Heart left ventricle (tissue), 16 donors: ENCODE measurements at regions of chr17 and their contacts with region 1.

Region 1: DNA sequence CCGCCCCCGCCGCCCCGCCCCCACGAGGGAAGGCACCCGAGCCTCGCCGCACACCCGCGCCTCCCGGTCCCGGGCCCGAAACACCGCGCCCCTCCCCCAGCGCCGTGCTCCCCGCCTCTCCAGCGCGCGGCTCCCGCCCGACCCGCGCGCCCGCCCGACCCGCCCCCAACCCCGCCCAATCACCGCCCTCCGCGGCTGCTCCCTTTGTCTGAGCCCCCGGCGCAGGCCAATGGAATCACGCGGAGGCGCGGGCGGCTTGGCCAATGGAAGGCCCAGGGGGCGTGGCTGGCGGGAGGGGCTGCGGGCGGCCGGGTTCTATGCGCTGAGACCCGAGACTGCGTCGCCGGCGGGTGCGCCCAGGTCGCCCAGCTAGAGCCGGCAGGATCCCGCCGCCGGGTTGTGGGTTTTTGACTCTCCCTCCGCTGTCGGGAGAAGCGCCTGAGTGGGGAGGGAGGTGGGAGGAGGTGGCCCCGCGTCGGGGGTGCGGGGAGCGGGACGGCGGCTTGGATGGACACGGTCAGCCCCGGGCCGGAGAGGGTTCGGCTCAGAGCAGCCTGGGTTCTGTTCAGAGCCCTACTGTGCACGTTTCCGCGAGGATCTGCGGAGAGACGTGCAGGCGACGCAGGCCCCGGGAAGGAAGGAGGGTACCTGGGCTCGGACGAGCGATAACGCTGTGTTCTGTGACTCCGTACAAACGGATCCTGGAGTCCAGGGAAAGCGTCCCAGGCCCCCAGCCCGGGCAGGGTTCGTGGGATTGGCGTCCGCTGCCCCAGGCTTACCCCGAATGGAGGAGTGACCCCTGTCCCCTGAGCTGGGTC is 49.0 kb upstream of the BAHCC1 start:
- DNase-seq: peak; percentile 98 to 100 (median 99)
- ATAC-seq: peak; percentile 87 to 94 (median 92)
- H3K4me3 ChIP-seq: peak overlapping the region; percentile 39 to 93 (median 77)
- H3K27ac ChIP-seq: peak overlapping the region; percentile 82 to 99 (median 96)
- H3K4me1 ChIP-seq: peaks cover 0 to 60% (median 17%) of the 10 kb centered on the region in 12 donors
- H3K27me3 ChIP-seq: peaks cover 0 to 28% (median 0%) of the 10 kb centered on the region in 9 donors
- CTCF ChIP-seq: no peak
- POLR2A ChIP-seq: peak in 1 of 2 donors; percentile 91

Region 2: GRCh38 chr17:80981062-80981902 is 365.0 kb before region 1 on chr17:
- intact Hi-C with region 1: no loop called
- DNase-seq: peak in 1 of 5 donors; percentile 62
- ATAC-seq: peak in 2 of 4 donors; percentile 31
- H3K4me3 ChIP-seq: peak overlapping the region in 3 of 12 donors; percentile 13 to 15 (median 13)
- H3K27ac ChIP-seq: no peak overlapping the region
- H3K4me1 ChIP-seq: peaks cover 0 to 18% (median 8%) of the 10 kb centered on the region in 12 donors
- H3K27me3 ChIP-seq: peaks cover 0 to 17% (median 10%) of the 10 kb centered on the region in 9 donors
- CTCF ChIP-seq: peak; percentile 69 to 93 (median 85)
- POLR2A ChIP-seq: no peak

Region 3: GRCh38 chr17:81387100-81388090 is 41.1 kb after region 1 on chr17:
- intact Hi-C with region 1: loop called in 1 of 10 experiments (anchors 2 kb)
- DNase-seq: peak in 4 of 5 donors; percentile 71 to 83 (median 78)
- ATAC-seq: peak; percentile 6 to 71 (median 45)
- H3K4me3 ChIP-seq: peak overlapping the region; percentile 61 to 91 (median 77)
- H3K27ac ChIP-seq: peak overlapping the region; percentile 79 to 100 (median 97)
- H3K4me1 ChIP-seq: peaks cover 5 to 66% (median 46%) of the 10 kb centered on the region in 12 donors
- H3K27me3 ChIP-seq: peaks cover 0 to 5% (median 0%) of the 10 kb centered on the region in 9 donors
- CTCF ChIP-seq: no peak
- POLR2A ChIP-seq: peak in 1 of 2 donors; percentile 48

Region 4: GRCh38 chr17:81543339-81543675 is 197.0 kb after region 1 on chr17:
- intact Hi-C with region 1: no loop called
- DNase-seq: peak in 2 of 5 donors; percentile 64 to 73
- ATAC-seq: peak; percentile 61 to 70 (median 68)
- H3K4me3 ChIP-seq: no peak overlapping the region
- H3K27ac ChIP-seq: peak overlapping the region in 4 of 12 donors; percentile 33 to 55 (median 46)
- H3K4me1 ChIP-seq: peaks cover 0 to 13% (median 0%) of the 10 kb centered on the region in 12 donors
- H3K27me3 ChIP-seq: peaks cover 0 to under 1% (median 0%) of the 10 kb centered on the region in 9 donors
- CTCF ChIP-seq: no peak
- POLR2A ChIP-seq: no peak